ENCODE measurements at regions of chr17 and their contacts with region 1.

Region 1: DNA sequence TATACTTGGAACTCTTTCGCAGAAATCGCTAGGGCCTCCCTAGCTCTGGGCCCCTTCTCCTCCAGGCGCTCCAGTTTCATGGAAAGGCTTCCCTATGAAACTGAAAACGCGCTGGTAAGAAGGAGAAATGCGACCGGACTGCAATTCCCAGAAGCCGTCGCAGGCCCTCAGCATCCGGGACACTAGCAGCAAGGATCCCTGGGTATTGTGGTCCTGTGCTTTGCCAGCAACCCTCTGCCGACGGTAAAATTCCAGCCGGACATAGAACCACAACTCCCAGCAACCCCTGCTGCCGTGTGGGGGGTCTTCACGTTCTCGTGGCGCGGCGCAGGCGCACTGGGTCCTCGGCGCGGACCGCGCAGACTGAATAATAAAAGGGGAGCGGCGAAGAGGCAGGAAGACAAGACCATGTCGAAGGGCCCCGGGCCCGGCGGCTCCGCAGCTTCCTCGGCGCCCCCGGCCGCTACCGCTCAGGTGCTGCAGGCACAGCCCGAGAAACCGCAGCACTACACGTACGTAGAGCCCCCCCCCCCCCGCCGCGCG is at the start of gene UNK:
- DNase-seq: peak; percentile 88 to 99 (median 94)
- ATAC-seq: peak; percentile 82
- H3K4me3 ChIP-seq: peak within 1 kb of the TSS; percentile 69
- H3K27ac ChIP-seq: peak within 1 kb of the TSS; percentile 100
- H3K4me1 ChIP-seq: peaks cover 23 to 39% of the 10 kb centered on the region in 2 experiments
- H3K27me3 ChIP-seq: no peaks in the 10 kb centered on the region
- CTCF ChIP-seq: no peak
- EP300 ChIP-seq: no peak
- POLR2A ChIP-seq: peak; percentile 29; the same call in 1 of the 2 replicates
- RAD21 ChIP-seq: no peak
- polyA plus RNA-seq, gene UNK: 13.7 to 18.8 TPM

Region 2: GRCh38 chr17:75705904-75706714 is 78.4 kb before region 1 on chr17:
- CTCF ChIA-PET with region 1: no interaction called
- POLR2A ChIA-PET with region 1: no interaction called
- in situ Hi-C with region 1: no loop called
- intact Hi-C with region 1: no loop called
- DNase-seq: no peak
- ATAC-seq: no peak
- H3K4me3 ChIP-seq: no peak overlapping the region
- H3K27ac ChIP-seq: no peak overlapping the region
- H3K4me1 ChIP-seq: peaks cover 0 to 15% of the 10 kb centered on the region in 2 experiments; a peak in 3 of 5 replicates
- H3K27me3 ChIP-seq: no peaks in the 10 kb centered on the region
- CTCF ChIP-seq: 0 out of 6 replicates have a peak, but pooled peaks of 1 of the 3 experiments have one; percentile 31
- EP300 ChIP-seq: no peak
- POLR2A ChIP-seq: no peak
- RAD21 ChIP-seq: no peak

Region 3: DNA sequence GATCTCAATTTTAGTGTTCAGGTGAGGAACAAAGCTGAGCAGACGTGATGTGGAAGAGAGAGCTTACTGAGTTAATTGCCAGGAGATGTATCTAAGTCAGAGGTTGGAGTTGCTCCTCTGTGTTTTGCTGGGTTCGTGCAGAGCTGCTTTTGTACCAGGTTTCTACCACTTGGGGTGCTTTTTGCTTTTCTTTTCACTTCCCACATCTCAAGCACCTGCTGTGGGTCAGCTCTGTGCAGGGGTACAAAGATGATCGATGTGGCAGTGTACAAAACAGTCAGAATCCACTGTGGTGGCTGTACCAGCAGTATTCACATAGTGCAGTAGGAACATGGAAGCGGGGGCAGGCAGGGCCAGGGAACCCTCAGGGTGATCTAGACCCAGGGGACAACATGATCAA is 14.9 kb after region 1 on chr17:
- CTCF ChIA-PET with region 1: no interaction called
- POLR2A ChIA-PET with region 1: interaction called, 62 read pairs
- in situ Hi-C with region 1: no loop called
- intact Hi-C with region 1: no loop called
- DNase-seq: peak in 1 of 4 experiments; percentile 27
- ATAC-seq: no peak
- H3K4me3 ChIP-seq: no peak overlapping the region
- H3K27ac ChIP-seq: no peak overlapping the region
- H3K4me1 ChIP-seq: no peaks in the 10 kb centered on the region; a peak in 1 of 5 replicates
- H3K27me3 ChIP-seq: no peaks in the 10 kb centered on the region
- CTCF ChIP-seq: no peak
- EP300 ChIP-seq: no peak
- POLR2A ChIP-seq: no peak
- RAD21 ChIP-seq: no peak

Region 4: DNA sequence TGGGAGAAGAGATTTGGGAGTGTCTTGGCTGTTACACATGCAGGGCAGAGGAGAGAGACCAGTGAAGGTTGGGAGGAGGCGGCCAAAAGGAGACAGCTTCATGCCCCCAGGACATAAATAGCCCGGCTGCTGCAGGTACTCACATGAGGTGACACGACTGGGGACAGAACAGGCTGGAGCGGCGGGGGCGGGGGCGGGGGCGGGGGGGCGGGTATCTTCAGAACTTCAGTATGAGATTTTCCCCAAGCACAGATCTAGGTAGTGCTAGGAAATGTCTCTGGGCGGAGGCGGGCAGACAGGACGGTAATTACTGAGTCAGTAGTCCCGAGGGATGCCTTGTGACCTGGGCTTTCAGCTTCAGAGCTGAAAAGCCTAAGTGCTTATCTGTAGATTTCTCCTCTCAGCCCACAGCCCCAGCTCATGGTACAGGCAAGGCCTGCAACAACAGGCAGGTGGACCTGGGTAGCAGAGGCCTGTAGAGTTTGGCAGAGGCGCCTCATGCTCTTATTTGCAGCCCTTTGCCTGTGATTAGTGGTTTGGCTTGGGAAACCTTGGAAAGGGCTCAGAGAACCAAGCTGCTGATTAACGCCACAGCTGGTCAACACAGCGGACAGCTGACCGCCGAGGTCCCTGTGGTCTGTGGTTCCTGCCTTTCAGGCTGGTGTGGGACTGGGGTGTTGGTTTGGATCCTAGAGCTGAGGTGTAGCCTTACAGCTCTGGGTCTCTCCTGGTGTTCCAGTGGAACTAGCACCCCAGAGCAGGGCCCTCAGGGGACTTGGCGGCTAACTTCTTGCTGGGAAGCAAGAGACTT is 24.6 kb after region 1 on chr17:
- CTCF ChIA-PET with region 1: no interaction called
- POLR2A ChIA-PET with region 1: interaction called, 20 read pairs
- in situ Hi-C with region 1: no loop called
- intact Hi-C with region 1: no loop called
- DNase-seq: peak in 2 of 4 experiments; percentile 20 to 67
- ATAC-seq: peak; percentile 58
- H3K4me3 ChIP-seq: no peak overlapping the region
- H3K27ac ChIP-seq: no peak overlapping the region; the same call in 2 of the 3 replicates
- H3K4me1 ChIP-seq: peaks cover 10 to 24% of the 10 kb centered on the region in 2 experiments
- H3K27me3 ChIP-seq: no peaks in the 10 kb centered on the region
- CTCF ChIP-seq: no peak
- EP300 ChIP-seq: no peak
- POLR2A ChIP-seq: no peak
- RAD21 ChIP-seq: peak in 1 of 2 experiments; percentile 11; a peak in 1 of 4 replicates

Region 5: GRCh38 chr17:75855310-75856081 is 71.0 kb after region 1 on chr17 and contains the start of gene WBP2:
- CTCF ChIA-PET with region 1: no interaction called
- POLR2A ChIA-PET with region 1: interaction called, 145 read pairs
- in situ Hi-C with region 1: no loop called
- intact Hi-C with region 1: loop called (anchors 5 kb)
- DNase-seq: peak; percentile 91 to 100 (median 95)
- ATAC-seq: peak; percentile 90
- H3K4me3 ChIP-seq: peak within 1 kb of the TSS; percentile 88
- H3K27ac ChIP-seq: peak within 1 kb of the TSS; percentile 93
- H3K4me1 ChIP-seq: peaks cover 31% of the 10 kb centered on the region in 2 experiments
- H3K27me3 ChIP-seq: no peaks in the 10 kb centered on the region
- CTCF ChIP-seq: peak; percentile 59 to 76 (median 66)
- EP300 ChIP-seq: no peak
- POLR2A ChIP-seq: peak; percentile 98
- RAD21 ChIP-seq: peak; percentile 57 to 59; a peak in 3 of 4 replicates
- polyA plus RNA-seq, gene WBP2: 2.2 to 3.7 TPM

Region 6: DNA sequence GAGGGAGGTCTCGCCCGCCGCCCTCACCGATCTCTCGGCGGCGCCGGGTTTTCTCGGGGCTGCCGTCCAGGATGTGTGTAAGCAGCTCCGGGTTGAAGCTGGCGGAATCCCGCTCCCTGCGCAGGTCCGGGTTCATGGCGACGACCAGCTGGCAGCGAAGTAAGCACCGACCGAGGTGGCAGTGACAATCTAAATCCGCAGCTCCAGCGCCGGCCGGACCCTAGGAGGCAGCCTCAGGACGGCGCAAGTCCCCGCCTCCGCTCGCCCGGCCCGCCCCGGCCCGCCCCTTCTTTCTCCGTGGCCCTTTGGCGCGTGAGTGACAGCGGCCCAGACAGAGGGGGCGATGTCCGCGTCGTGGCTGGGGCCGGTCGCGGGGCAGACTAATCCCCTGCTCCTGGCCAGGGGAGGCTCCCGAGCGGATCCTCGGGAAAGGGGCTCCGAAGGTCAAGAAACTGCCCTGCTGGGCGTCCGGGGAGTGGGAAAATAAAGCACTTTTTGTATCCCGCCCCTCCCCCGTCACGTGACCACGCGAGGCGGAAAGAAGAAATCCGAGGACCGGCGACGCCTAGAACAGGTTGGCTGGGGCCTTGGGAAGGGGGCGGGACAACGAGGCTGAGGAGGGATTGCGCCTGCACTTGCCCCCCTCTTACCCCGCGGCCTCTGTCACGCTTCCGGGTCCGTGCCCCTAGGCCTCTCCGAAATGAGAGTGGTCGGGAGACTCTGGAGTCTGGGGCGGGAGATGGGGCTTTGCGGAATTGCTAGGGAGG is 194.6 kb after region 1 on chr17 and contains the starts of genes ACOX1 and TEN1:
- CTCF ChIA-PET with region 1: no interaction called
- POLR2A ChIA-PET with region 1: interaction called, 5 read pairs
- in situ Hi-C with region 1: no loop called
- intact Hi-C with region 1: loop called (anchors 10 kb)
- DNase-seq: peak; percentile 91 to 98 (median 92)
- ATAC-seq: peak; percentile 94
- H3K4me3 ChIP-seq: peak within 1 kb of the TSS; percentile 67
- H3K27ac ChIP-seq: peak within 1 kb of the TSS; percentile 78
- H3K4me1 ChIP-seq: peaks cover 34 to 39% of the 10 kb centered on the region in 2 experiments
- H3K27me3 ChIP-seq: no peaks in the 10 kb centered on the region
- CTCF ChIP-seq: peak; percentile 20 to 47 (median 28); a peak in 4 of 6 replicates
- EP300 ChIP-seq: peak; percentile 24; the same call in 1 of the 2 replicates
- POLR2A ChIP-seq: peak; percentile 96
- RAD21 ChIP-seq: peak in 1 of 2 experiments; percentile 27; a peak in 2 of 4 replicates
- polyA plus RNA-seq, gene ACOX1: 8.6 to 9.5 TPM
- polyA plus RNA-seq, gene TEN1: 1.3 to 3.3 TPM